Endothelial cell of umbilical vein (primary cell): ENCODE measurements at regions of chr2 and their contacts with region 1.

Region 1: DNA sequence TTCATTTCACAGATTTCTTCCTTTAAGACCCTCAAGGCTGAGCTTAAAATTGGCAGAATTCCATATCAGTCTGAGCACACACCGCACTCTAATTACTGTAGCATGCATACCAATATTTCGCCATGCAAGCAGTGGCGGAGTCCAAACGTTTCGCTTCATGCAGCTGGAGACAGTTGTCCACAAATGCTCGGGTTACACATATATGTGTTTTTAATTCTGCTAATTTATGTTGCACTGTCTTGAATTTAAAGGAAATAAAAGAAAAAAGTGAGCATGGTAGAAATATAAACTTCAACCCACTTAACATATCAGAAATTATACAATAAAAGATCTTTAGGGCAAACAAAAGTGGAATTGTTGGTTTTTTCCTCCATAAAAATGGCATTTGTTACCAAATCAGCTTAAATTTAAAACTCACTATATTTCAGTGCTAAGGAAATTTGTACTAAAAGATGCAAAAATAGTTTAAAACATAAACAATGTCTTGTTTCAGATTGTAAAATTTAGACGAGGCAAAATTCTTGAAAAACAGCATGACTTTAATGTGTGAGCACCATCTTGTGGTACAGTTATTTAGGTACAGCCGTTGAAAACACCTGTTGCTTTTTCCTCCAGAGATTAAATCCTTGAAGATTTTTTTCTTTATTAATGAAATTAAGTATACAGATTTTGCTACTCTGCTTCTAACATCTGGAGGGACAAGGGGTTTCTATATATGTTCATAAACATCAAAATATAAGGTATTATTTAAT is 24.1 kb upstream of the KANSL1L start:
- DNase-seq: peak; percentile 65
- H3K4me3 ChIP-seq: peak overlapping the region; percentile 13 to 76 (median 45)
- H3K27ac ChIP-seq: no peak overlapping the region
- H3K4me1 ChIP-seq: peaks cover 14% of the 10 kb centered on the region
- H3K27me3 ChIP-seq: peaks cover 0 to 3% of the 10 kb centered on the region in 2 experiments
- CTCF ChIP-seq: peak; percentile 31 to 45
- POLR2A ChIP-seq: no peak

Region 2: DNA sequence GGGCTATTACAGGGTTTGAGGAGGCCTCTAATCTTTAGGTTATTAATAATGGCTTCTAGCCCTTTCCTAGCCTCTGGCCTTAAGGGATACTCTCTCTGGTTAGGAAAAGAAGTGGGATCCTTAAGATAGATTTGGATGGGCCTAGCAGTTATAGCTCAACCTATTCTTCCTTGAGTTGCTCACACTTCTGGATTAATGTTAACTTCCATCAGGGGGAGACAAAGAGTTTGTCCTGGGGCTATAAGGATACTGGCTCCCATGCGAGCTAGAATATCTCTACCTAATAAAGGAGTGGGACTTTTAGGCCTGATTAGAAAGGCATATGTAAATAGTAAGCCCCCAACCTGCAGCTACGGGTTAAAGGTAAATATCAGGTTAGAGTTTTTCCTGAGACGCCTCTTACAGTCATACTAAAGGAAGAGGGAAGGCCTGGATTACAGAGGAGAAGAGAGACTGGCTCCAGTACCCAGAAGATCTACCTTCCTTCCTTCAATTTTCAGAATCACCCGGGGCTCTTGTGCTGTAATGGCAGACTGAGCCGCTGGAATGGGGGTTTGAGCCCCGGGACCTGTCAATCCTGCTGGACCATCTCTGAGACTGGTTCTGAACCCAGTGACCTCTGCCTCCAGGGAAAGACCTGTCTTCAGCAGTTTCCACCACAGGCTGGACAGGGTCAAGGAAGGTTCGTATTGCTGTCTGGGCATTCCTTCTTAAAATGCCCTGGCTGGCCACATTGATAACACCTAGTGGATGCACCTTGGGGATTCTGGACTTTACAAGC is 1802.8 kb before region 1 on chr2:
- CTCF ChIA-PET with region 1: interaction called, 4 read pairs
- POLR2A ChIA-PET with region 1: no interaction called
- dilution Hi-C with region 1: no loop called
- intact Hi-C with region 1: loop called (anchors 2 kb)
- DNase-seq: no peak
- H3K4me3 ChIP-seq: no peak overlapping the region
- H3K27ac ChIP-seq: no peak overlapping the region
- H3K4me1 ChIP-seq: no peaks in the 10 kb centered on the region
- H3K27me3 ChIP-seq: no peaks in the 10 kb centered on the region
- CTCF ChIP-seq: peak in 1 of 2 donors; percentile 4
- POLR2A ChIP-seq: no peak

Region 3: GRCh38 chr2:209577376-209578357 is 617.6 kb before region 1 on chr2:
- CTCF ChIA-PET with region 1: interaction called, 12 read pairs
- POLR2A ChIA-PET with region 1: no interaction called
- dilution Hi-C with region 1: no loop called
- intact Hi-C with region 1: loop called (anchors 5 kb)
- DNase-seq: peak; percentile 14
- H3K4me3 ChIP-seq: no peak overlapping the region
- H3K27ac ChIP-seq: no peak overlapping the region
- H3K4me1 ChIP-seq: no peaks in the 10 kb centered on the region
- H3K27me3 ChIP-seq: no peaks in the 10 kb centered on the region
- CTCF ChIP-seq: peak in 1 of 2 donors; percentile 12
- POLR2A ChIP-seq: no peak

Region 4: DNA sequence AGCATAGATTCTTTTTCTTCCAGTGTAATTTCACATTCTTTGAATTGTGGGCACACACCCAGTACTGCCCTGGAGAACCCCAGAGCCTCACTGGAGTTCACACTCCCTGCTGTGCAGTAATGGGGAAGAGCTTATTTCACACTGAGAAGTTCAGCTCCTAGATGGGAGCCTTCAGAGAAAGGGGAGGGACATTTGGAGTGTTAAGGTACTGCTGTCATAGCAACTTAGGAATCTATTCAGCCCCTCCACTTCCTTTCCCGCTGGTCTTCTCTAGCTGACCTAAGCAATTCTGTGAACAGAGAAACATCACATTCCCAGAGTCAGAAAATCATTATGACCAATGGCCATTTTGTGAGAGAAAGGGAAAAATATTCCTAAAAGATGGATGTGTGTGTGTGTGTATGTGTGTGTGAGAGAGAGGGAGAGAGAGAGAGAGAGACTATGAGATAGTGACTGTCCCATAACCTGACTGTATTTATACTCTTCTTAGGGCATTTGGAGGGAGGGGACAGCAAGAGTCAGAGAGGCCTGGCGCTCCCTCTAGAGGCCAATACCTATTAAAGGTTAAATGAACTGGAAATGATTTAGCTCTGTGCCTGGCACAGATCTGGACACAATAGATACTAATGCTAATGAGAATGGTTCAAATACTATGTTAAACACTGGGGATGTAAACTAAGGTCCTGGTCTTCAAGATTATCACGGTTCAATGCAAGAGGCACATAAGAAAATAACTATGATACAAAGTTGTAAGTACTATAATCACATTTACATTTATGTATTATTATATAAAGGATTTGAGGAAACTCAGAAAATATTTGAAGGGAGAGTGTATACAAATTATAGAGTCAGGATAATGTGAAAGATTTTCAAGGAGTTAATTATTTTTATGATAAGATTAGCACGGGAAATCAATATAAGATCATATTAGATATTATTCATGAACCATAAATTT is 234.3 kb before region 1 on chr2:
- CTCF ChIA-PET with region 1: interaction called, 22 read pairs
- POLR2A ChIA-PET with region 1: no interaction called
- dilution Hi-C with region 1: no loop called
- intact Hi-C with region 1: no loop called
- DNase-seq: peak; percentile 65
- H3K4me3 ChIP-seq: no peak overlapping the region
- H3K27ac ChIP-seq: no peak overlapping the region
- H3K4me1 ChIP-seq: no peaks in the 10 kb centered on the region
- H3K27me3 ChIP-seq: peaks cover 2 to 8% of the 10 kb centered on the region in 2 experiments
- CTCF ChIP-seq: peak; percentile 57 to 64
- POLR2A ChIP-seq: no peak

Region 5: GRCh38 chr2:209984291-209984690 is 211.0 kb before region 1 on chr2:
- CTCF ChIA-PET with region 1: interaction called, 169 read pairs
- POLR2A ChIA-PET with region 1: no interaction called
- dilution Hi-C with region 1: no loop called
- intact Hi-C with region 1: no loop called
- DNase-seq: no peak
- H3K4me3 ChIP-seq: no peak overlapping the region
- H3K27ac ChIP-seq: no peak overlapping the region
- H3K4me1 ChIP-seq: no peaks in the 10 kb centered on the region
- H3K27me3 ChIP-seq: peaks cover 5 to 9% of the 10 kb centered on the region in 2 experiments
- CTCF ChIP-seq: no peak
- POLR2A ChIP-seq: no peak

Region 6: DNA sequence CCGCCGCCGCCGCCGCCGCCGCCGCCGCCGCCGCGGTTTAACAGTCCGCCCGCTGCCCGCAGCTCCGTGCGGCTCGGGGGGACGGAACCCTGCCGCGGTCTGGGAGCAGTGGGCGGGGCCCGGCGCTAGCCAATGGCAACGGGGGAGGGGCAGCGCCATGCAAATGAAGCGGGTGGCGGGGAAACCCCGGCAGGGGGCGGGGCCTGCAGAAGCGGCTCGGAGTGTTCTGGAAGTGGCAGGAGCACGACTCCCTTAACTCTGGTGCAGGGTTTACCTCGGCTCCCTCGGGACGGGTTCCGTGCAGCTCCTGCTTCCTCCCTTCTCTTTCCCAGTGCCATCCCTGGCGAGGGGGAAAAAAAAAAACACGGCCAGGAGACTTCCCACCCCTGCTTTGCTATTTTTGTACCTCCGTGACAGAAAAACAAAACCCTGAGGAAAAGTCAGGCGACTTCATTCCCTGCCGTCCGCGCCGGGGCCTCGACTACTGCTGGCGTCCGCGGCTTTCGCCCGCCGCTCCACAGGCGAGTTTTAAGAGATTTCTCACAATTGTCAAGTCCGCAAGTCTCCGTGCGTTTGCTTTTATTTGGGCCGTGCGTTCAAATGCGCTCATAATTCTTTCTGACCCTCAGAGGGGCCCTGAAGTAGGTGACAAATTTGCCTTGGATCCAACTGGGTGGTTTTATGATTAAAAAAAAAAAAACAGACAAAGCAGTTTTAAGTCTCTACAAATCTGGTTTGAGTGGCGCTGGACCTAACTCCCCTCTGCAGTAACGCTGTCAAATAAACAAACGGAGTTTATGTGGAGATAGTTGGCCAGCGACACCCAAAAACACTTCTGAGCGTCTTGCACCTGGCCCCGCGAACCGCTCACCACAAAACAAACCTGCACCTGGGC is 23.7 kb before region 1 on chr2 and contains the start of gene KANSL1L:
- CTCF ChIA-PET with region 1: interaction called, 6 read pairs
- POLR2A ChIA-PET with region 1: no interaction called
- dilution Hi-C with region 1: no loop called
- intact Hi-C with region 1: loop called (anchors 1 kb)
- DNase-seq: peak; percentile 97
- H3K4me3 ChIP-seq: peak within 1 kb of the TSS; percentile 83 to 96 (median 92)
- H3K27ac ChIP-seq: peak within 1 kb of the TSS; percentile 87
- H3K4me1 ChIP-seq: peaks cover 12% of the 10 kb centered on the region
- H3K27me3 ChIP-seq: peaks cover 0 to 2% of the 10 kb centered on the region in 2 experiments
- CTCF ChIP-seq: no peak
- POLR2A ChIP-seq: peak; percentile 57
- total RNA-seq, gene KANSL1L: 13.4 and 14.0 TPM in 2 replicates